Mammary epithelial cell (primary cell): ENCODE measurements at regions of chr4 and their contacts with region 1.

Region 1: GRCh38 chr4:37528166-37528885 is 157.8 kb downstream of the RELL1 start:
- DNase-seq: peak; percentile 48
- H3K4me3 ChIP-seq: no peak overlapping the region
- H3K27ac ChIP-seq: no peak overlapping the region
- H3K4me1 ChIP-seq: no peaks in the 10 kb centered on the region
- H3K27me3 ChIP-seq: no peaks in the 10 kb centered on the region
- CTCF ChIP-seq: peak in 1 of 2 donors; percentile 1

Region 2: GRCh38 chr4:37561803-37562207 is 33.5 kb after region 1 on chr4:
- CTCF ChIA-PET with region 1: interaction called, 12 read pairs
- dilution Hi-C with region 1: no loop called
- in situ Hi-C with region 1: no loop called
- intact Hi-C with region 1: no loop called
- DNase-seq: peak; percentile 72
- H3K4me3 ChIP-seq: no peak overlapping the region
- H3K27ac ChIP-seq: no peak overlapping the region
- H3K4me1 ChIP-seq: no peaks in the 10 kb centered on the region
- H3K27me3 ChIP-seq: no peaks in the 10 kb centered on the region
- CTCF ChIP-seq: no peak